Heart left ventricle (tissue), 16 donors: ENCODE measurements at regions of chr1 and their contacts with region 1.

Region 1: DNA sequence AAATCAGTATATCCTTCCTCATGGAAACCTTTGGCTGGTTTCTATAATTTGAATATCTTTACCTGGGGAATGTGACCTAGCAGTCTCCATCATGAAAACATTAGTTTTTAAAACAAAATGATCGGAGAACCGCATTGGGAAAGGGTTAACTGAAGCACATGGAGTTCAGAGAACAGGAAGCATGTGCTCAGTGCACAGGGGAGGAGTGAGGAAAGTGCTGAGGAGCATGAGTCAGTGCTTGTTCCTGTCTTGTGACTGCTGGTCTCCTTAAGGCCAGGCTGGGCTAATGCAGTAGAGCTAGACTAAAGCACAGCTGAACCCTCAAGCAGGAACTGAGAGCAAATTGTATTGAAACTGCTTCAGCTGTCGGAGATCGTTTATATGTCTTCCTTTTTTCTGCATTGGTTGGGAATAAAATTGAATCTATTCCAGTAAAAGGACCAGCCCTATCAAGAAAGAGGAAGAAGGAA is 5.8 kb downstream of the IFI16 start:
- DNase-seq: peak in 4 of 5 donors; percentile 66 to 74 (median 70)
- ATAC-seq: peak; percentile 93 to 99 (median 98)
- H3K4me3 ChIP-seq: peak overlapping the region in 6 of 12 donors; percentile 7 to 82 (median 11)
- H3K27ac ChIP-seq: peak overlapping the region in 10 of 12 donors; percentile 28 to 99 (median 52)
- H3K4me1 ChIP-seq: peaks cover 0 to 74% (median 27%) of the 10 kb centered on the region in 12 donors
- H3K27me3 ChIP-seq: no peaks in the 10 kb centered on the region
- CTCF ChIP-seq: no peak
- POLR2A ChIP-seq: peak in 1 of 2 donors; percentile 28

Region 2: DNA sequence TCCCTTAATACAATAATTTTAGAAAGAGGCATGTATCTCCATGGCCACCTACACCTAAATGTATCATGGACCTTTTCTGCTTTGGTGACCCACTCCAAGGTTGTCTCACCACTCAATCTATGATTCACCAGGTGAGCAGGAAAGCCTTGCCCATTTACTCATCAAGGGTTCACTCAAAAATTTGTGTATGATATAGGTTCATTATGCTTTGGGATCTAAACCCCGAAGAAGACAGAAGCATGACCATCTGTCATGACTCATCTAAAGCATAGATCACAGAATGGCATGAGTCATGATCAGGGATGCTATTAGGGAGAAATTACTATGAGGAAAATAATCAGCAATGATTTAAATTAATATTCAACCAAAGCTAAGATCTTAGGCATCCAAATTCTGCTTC is 45.6 kb before region 1 on chr1:
- intact Hi-C with region 1: no loop called
- DNase-seq: no peak
- ATAC-seq: no peak
- H3K4me3 ChIP-seq: no peak overlapping the region
- H3K27ac ChIP-seq: no peak overlapping the region
- H3K4me1 ChIP-seq: no peaks in the 10 kb centered on the region
- H3K27me3 ChIP-seq: peaks cover 0 to 4% (median 0%) of the 10 kb centered on the region in 9 donors
- CTCF ChIP-seq: no peak
- POLR2A ChIP-seq: no peak

Region 3: DNA sequence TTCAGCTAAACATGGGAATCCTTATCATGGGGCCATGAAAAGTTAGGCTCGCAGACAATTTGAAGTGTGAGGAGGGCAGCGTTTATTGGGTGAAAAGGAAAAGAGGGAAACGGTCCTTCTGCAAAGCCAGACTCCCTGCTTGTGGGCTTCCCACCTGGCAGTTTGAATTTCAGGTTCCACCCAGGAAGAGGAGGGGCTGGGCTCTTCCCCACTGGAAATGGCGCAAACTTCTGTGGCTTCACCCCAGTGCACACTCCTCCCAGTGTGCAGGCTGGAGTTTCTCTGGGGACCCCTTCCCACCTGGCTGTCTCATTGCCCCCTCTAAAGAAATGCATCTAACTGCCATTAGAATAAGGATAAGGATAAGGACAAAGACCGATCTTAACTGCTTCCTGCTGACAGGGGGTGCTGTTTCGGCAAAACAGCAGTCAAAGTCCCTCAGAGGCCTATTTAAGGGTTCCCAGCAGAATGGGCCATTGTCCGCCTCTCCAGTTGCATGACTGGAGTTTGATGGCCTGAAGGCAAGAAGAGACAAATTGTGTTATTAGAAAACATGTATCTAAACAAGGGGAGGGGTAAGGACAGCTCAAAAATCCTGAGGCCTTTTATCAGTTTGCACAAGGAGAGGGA is 40.7 kb after region 1 on chr1:
- intact Hi-C with region 1: loop called in 2 of 10 experiments (anchors 5 to 10 kb)
- DNase-seq: no peak
- ATAC-seq: no peak
- H3K4me3 ChIP-seq: no peak overlapping the region
- H3K27ac ChIP-seq: peak overlapping the region in 1 of 12 donors; percentile 73
- H3K4me1 ChIP-seq: peaks cover 0 to 44% (median 7%) of the 10 kb centered on the region in 12 donors
- H3K27me3 ChIP-seq: no peaks in the 10 kb centered on the region
- CTCF ChIP-seq: no peak
- POLR2A ChIP-seq: no peak

Region 4: DNA sequence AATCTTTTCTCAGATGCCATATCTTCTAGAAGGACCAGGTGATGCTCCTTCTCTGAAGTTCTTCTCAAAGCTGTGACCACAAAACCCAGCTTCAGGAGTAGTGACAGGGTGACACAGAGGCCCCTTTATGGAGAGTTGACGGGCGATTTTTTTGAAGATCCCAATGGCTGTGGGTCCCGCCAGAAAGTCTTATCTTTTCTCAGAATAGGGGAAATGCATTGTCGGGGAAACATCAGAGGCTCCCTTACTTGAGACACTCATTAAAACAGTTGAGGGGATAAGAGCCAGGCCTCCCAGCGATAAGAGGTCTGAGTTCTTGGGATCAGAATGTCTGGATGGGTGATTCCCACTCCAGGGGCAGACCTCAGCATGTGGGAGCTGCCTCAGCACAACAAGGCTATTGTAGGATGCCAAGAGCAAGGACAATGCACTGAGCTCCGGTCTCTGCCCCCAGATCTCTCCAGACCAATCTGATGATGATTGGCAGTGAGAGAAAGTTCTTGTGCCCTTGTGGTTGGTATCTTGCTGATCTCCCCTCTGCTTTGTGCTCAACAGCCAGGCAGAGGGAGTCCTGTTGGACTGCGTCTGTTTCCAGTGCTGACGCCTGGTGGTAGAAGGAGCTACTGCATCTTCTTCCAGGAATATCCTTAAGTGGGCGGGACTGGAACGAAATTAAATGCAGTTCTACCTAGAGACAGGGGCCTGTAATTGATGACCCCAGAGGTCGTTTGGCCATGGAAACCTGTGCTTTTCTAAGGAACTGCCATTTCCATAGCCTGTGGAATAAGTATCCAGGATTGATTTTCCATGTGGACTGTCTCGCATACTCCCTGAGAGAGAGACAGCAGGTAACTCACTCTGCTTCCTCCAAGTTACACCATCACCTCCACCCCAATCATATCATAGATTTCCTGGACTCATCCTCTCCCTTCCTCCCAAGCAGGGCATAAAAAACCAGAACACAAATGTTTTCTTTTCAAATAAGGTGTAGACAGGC is 182.4 kb after region 1 on chr1:
- intact Hi-C with region 1: no loop called
- DNase-seq: peak in 4 of 5 donors; percentile 37 to 60 (median 47)
- ATAC-seq: peak in 3 of 4 donors; percentile 67 to 73 (median 68)
- H3K4me3 ChIP-seq: no peak overlapping the region
- H3K27ac ChIP-seq: no peak overlapping the region
- H3K4me1 ChIP-seq: no peaks in the 10 kb centered on the region
- H3K27me3 ChIP-seq: peaks cover 0 to 37% (median 2%) of the 10 kb centered on the region in 9 donors
- CTCF ChIP-seq: peak; percentile 61 to 81 (median 74)
- POLR2A ChIP-seq: no peak